SK-N-SH (cell line): ENCODE measurements at regions of chr3 and their contacts with region 1.

Region 1: GRCh38 chr3:129249276-129250065 is at the start of gene COPG1:
- DNase-seq: peak; percentile 95
- H3K4me3 ChIP-seq: peak within 1 kb of the TSS; percentile 86 to 95
- H3K27ac ChIP-seq: peak within 1 kb of the TSS; percentile 66 to 88
- H3K4me1 ChIP-seq: peaks cover 6 to 13% of the 10 kb centered on the region in 2 experiments; a peak in 2 of 4 replicates
- H3K27me3 ChIP-seq: no peaks in the 10 kb centered on the region
- CTCF ChIP-seq: no peak
- EP300 ChIP-seq: no peak
- RAD21 ChIP-seq: no peak
- polyA plus RNA-seq, gene COPG1: 111 and 114 TPM in 2 replicates

Region 2: GRCh38 chr3:129052675-129053074 is 196.8 kb before region 1 on chr3:
- CTCF ChIA-PET with region 1: interaction called, 43 read pairs
- POLR2A ChIA-PET with region 1: no interaction called
- DNase-seq: peak; percentile 47
- H3K4me3 ChIP-seq: no peak overlapping the region
- H3K27ac ChIP-seq: peak overlapping the region in 1 of 2 experiments; percentile 78; a peak in 2 of 4 replicates
- H3K4me1 ChIP-seq: peaks cover 0 to 14% of the 10 kb centered on the region in 2 experiments; a peak in 1 of 4 replicates
- H3K27me3 ChIP-seq: 0 out of 2 replicates have a peak, but pooled peaks cover 7% of the 10 kb centered on the region
- CTCF ChIP-seq: no peak
- EP300 ChIP-seq: no peak
- RAD21 ChIP-seq: no peak

Region 3: DNA sequence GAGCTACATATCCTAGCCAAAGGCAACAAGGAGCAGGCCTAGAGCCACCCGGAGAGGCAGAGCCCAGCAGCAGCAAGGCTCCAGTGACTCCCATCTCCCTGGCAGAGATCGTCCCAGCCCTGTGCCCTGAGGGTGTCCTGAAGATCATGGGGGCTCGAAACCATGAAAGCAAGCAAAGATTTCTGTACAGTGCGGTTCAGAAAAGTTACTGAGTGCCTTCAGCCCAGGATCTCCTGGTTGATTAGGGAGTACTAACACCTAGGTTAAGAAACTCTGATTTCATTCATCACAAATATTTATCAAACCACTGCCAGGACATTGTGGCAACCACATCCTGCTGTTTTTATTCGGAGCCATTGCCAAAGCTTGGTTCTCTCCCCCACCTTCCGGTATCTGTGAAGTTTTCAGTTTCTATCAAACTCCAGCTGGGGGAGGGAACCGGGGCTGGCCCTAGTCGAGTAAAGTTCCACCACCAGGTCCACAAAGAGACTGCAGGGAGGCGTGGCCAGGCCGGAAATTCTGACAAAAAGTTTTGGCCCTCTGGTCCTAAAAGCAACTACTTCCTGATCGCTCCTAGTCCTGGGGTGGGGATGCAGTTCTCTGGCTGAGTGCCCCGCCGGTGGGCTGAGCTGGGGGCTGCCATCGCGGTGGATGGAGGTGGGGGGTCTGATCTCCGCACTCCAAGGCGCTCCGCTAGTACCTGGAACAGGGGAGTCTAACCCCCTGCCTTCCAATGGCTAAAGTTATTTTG is 129.0 kb before region 1 on chr3:
- CTCF ChIA-PET with region 1: interaction called, 22 read pairs
- POLR2A ChIA-PET with region 1: no interaction called
- DNase-seq: peak; percentile 67
- H3K4me3 ChIP-seq: peak overlapping the region; percentile 81 to 86
- H3K27ac ChIP-seq: peak overlapping the region; percentile 52 to 72
- H3K4me1 ChIP-seq: peaks cover 0 to 14% of the 10 kb centered on the region in 2 experiments; a peak in 2 of 4 replicates
- H3K27me3 ChIP-seq: no peaks in the 10 kb centered on the region
- CTCF ChIP-seq: peak; percentile 35
- EP300 ChIP-seq: no peak
- RAD21 ChIP-seq: no peak

Region 4: DNA sequence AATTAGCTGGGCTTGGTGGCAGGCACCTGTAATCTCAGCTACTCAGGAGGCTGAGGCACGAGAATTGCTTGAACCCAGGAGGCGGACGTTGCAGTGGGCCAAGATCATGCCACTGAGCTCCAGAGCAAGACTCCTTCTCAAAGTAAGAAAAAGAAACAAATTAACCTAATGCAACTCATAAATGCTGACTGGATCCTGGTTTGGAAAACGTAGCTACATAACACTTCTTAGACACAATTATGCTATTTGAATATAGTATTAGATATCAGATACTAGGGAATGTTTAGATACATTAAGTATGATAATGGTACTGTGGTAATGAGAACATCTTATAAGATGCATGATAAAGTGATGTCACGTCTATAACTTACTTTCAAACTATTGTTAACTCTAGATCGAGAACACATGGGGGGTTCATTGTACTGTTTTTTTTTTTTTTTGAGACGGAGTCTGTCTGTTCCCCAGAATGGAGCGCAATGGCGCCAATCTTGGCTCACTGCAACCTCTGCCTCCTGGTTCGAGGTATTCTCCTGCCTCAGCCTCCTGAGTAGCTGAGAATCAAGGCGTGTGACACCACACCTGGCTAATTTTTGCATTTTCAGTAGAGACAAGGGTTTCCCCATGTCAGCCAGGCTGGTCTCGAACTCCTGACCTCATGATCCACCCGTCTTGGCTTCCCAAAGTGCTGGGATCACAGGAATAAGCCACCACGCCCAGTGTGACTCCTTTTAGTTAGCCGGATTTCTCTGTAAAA is 82.7 kb before region 1 on chr3:
- CTCF ChIA-PET with region 1: interaction called, 11 read pairs
- POLR2A ChIA-PET with region 1: interaction called, 5 read pairs
- DNase-seq: no peak
- H3K4me3 ChIP-seq: no peak overlapping the region
- H3K27ac ChIP-seq: no peak overlapping the region
- H3K4me1 ChIP-seq: peaks cover 0 to 11% of the 10 kb centered on the region in 2 experiments; a peak in 1 of 4 replicates
- H3K27me3 ChIP-seq: no peaks in the 10 kb centered on the region
- CTCF ChIP-seq: no peak
- EP300 ChIP-seq: no peak
- RAD21 ChIP-seq: no peak

Region 5: DNA sequence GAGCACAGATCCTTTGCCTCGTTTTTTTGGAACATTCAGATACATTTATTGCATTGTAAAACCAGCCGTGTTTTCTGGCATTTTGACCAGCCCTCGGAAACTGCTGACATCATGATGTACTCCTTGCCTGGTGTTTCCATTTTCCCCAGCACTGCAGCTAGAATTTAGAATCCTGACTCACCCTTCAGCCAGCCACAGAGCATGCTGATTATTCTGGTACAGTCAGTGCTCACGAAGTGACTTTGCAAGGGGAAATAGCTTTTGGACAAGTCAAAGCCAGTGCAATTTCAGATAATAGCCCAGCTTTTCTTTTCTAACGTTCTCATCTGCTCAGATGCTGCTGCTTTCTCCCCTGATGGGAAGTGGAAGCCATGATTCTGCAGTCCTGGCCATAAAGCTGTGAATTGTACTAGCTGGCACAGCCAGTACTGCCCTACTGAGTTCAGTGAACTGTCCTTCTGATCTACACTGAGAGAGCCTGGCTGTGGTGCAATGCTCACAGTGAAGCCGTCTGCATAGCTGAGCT is 53.7 kb before region 1 on chr3:
- CTCF ChIA-PET with region 1: interaction called, 13 read pairs
- POLR2A ChIA-PET with region 1: no interaction called
- DNase-seq: no peak
- H3K4me3 ChIP-seq: peak overlapping the region; percentile 17 to 38; a peak in 3 of 4 replicates
- H3K27ac ChIP-seq: peak overlapping the region; percentile 64 to 89
- H3K4me1 ChIP-seq: peaks cover 0 to 18% of the 10 kb centered on the region in 2 experiments; a peak in 1 of 4 replicates
- H3K27me3 ChIP-seq: no peaks in the 10 kb centered on the region
- CTCF ChIP-seq: no peak
- EP300 ChIP-seq: peak in 1 of 2 experiments; percentile 33; a peak in 1 of 4 replicates
- RAD21 ChIP-seq: no peak

Region 6: DNA sequence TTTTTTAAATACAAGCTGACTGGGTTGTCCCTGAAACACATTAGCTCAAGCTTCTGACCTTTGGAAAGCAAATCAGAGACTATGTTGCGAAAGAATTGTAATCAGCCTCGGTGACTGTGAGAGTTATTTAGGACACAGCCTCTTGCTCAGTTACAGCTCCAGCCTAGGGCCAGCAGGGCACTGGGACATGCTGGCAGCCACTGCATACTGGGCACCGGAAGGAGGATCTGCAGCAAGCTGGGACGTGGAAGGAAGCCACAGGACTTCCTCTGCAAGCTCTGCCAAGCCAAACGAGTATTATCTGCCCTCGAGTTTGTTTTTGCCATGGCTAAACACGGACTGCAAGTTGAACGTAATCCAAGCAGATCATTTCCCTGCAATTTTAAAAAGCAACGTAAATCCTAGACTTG is 24.5 kb before region 1 on chr3:
- CTCF ChIA-PET with region 1: interaction called, 49 read pairs
- POLR2A ChIA-PET with region 1: interaction called, 5 read pairs
- DNase-seq: peak; percentile 73
- H3K4me3 ChIP-seq: peak overlapping the region in 1 of 2 experiments; percentile 20; a peak in 1 of 4 replicates
- H3K27ac ChIP-seq: peak overlapping the region; percentile 71 to 91
- H3K4me1 ChIP-seq: peaks cover 3 to 30% of the 10 kb centered on the region in 2 experiments; a peak in 2 of 4 replicates
- H3K27me3 ChIP-seq: no peaks in the 10 kb centered on the region
- CTCF ChIP-seq: no peak
- EP300 ChIP-seq: no peak
- RAD21 ChIP-seq: no peak